Transverse colon (tissue), 4 donors: ENCODE measurements at regions of chr10 and their contacts with region 1.

Region 1: DNA sequence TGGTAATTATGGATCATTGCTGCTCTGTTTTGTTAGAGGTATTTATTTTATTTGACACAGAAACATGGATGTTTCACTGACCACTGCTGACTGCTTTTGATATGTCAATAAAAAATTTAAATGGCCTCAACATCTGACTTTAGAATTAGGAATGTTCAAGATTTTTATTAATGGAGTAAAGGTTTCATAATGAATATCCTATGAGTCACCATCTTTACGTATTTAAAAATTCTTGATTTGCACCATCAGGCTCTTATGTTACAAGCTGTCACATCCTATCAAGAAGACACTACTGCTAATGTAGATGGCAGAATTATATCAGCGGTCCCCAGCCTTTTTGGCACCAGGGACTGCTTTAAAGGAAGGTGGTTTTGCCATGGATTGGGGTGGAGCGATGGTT is 578.7 kb upstream of the NRP1 start:
- DNase-seq: no peak
- H3K4me3 ChIP-seq: no peak overlapping the region
- H3K27ac ChIP-seq: no peak overlapping the region
- H3K4me1 ChIP-seq: no peaks in the 10 kb centered on the region
- H3K27me3 ChIP-seq: no peaks in the 10 kb centered on the region
- CTCF ChIP-seq: no peak
- EP300 ChIP-seq: no peak
- POLR2A ChIP-seq: no peak

Region 2: DNA sequence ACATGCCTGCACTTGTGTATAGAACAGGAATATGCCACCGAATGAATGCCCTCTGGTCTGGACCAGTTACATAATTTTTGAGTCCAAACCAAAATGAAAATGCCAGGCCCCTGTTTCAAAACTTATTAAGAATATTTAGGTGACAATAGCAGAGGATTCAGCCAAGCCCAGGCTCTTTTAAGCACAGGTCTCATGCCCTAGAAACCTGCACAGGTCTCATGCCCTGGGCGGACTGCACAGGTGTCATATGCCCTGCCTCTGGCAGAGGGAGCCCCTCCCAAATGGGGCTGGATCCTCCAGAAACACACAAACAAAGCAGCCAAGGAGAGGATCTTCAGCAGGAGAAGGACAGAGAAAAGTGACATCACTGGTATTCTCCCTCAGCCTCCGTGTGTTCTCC is 26.7 kb after region 1 on chr10:
- in situ Hi-C with region 1: no loop called
- intact Hi-C with region 1: loop called (anchors 1 kb)
- DNase-seq: no peak
- H3K4me3 ChIP-seq: no peak overlapping the region
- H3K27ac ChIP-seq: no peak overlapping the region
- H3K4me1 ChIP-seq: no peaks in the 10 kb centered on the region
- H3K27me3 ChIP-seq: no peaks in the 10 kb centered on the region
- CTCF ChIP-seq: no peak
- EP300 ChIP-seq: no peak
- POLR2A ChIP-seq: no peak